ENCODE measurements at regions of chr6 and their contacts with region 1.

Region 1: DNA sequence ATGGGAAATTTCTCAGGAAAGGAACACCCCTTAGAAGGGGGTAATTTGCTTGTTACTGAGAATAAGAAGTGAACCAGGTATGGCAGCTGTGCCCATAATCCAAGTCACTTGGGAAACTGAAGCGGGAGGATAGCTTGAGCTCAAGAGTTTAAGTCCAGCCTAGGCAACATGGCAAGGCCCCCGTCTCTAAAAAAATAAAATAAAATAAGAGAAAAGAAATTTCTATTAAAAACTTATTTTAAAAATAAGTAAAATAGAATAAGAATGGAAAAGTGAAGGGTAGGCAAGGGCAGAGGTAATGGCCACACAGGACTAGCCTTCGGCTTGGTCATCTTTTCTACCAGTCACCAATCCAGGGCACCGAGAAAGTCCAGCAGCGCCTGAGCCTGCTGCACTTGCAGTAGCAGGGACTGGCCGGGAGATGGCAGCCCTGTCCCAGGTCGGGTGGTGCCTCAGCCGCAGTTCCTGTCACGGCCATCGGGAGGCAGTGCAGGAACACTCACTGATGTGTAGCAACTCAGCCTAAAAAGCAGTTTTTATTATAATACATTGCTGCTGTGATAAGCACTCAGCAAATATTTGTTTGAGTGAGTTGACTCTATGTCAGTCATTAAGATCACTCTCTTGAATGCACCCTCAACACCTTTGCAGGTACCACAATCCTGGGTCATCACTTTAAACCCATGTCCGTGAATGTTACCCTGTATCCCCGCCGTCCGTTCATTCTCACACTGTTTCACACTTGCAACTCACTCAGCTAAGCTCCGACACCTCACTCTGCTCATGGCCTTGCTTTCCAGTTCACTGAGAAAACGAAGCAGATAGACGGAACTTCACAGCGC is 23.2 kb upstream of the GCM1 start:
- DNase-seq: peak; percentile 83
- H3K4me3 ChIP-seq: no peak overlapping the region
- H3K27ac ChIP-seq: no peak overlapping the region
- H3K4me1 ChIP-seq: peaks cover 17% of the 10 kb centered on the region
- H3K27me3 ChIP-seq: no peaks in the 10 kb centered on the region

Region 2: DNA sequence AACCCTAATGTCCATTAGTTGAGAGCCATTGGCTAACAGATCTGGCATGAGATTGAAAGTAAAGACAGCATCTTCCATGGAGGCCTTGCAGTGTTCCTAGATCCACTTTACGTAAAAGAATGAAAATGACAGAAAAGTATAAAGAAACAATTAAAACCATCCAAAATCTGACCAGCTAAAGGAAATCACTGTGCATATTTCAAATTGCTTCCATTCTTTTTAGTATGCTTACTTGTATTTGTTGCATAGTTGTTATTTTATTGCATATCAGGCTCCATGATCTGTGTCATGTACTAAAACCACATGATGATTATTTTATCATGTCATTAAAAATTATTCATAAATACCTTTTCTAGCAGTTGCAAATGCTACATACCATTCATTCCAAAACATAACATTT is 305.1 kb after region 1 on chr6:
- in situ Hi-C with region 1: loop called (anchors 5 kb)
- DNase-seq: peak; percentile 29
- H3K4me3 ChIP-seq: no peak overlapping the region
- H3K27ac ChIP-seq: no peak overlapping the region
- H3K4me1 ChIP-seq: peaks cover 9% of the 10 kb centered on the region; the same call in 1 of the 2 replicates
- H3K27me3 ChIP-seq: no peaks in the 10 kb centered on the region